Activated CD8-positive, alpha-beta T cell treated with anti-CD3 and anti-CD28 coated beads, Interleukin-2, amount 10 ng/mL, durations not matched to agents 7 days and 5 days (primary cell): ENCODE measurements at regions of chr17 and their contacts with region 1.

Region 1: GRCh38 chr17:80454557-80455335 is 21.7 kb downstream of the NPTX1 start:
- DNase-seq: peak; percentile 97
- ATAC-seq: peak; percentile 95
- H3K4me3 Mint-ChIP-seq: peak overlapping the region; percentile 94
- H3K27ac Mint-ChIP-seq: peak overlapping the region; percentile 95
- H3K4me1 Mint-ChIP-seq: peaks cover 50% of the 10 kb centered on the region
- H3K27me3 Mint-ChIP-seq: peaks cover 16% of the 10 kb centered on the region

Region 2: GRCh38 chr17:80426681-80427326 is 27.9 kb before region 1 on chr17:
- CTCF ChIA-PET with region 1: interaction called, 13 read pairs
- POLR2A ChIA-PET with region 1: interaction called, 7 read pairs
- DNase-seq: peak; percentile 89
- ATAC-seq: peak; percentile 98
- H3K4me3 Mint-ChIP-seq: no peak overlapping the region
- H3K27ac Mint-ChIP-seq: no peak overlapping the region
- H3K4me1 Mint-ChIP-seq: peaks cover 27% of the 10 kb centered on the region
- H3K27me3 Mint-ChIP-seq: no peaks in the 10 kb centered on the region

Region 3: DNA sequence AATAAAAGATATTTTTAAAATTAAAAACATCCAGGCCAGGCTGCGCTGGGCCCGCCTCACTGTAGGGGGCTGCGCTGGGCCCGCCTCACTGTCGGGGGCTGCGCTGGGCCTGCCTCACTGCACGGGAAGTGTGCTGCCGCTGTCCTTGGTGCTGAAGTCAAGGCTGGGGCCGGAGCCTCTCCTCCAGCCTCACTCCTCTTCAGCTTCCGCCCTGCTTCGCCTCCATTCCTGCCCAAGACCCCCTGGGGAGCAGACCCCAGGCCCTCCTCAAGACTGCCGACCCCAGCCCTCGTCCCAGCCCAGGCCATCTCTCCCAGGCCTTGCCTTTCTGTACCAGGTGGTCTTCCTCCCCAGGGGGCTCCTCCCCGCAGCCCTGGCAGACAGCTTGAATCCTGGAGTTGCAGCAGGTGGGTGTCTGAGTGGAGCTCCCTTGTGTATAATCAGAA is 13.6 kb before region 1 on chr17:
- CTCF ChIA-PET with region 1: no interaction called
- POLR2A ChIA-PET with region 1: interaction called, 14 read pairs
- DNase-seq: peak; percentile 80
- ATAC-seq: peak; percentile 87
- H3K4me3 Mint-ChIP-seq: no peak overlapping the region
- H3K27ac Mint-ChIP-seq: no peak overlapping the region
- H3K4me1 Mint-ChIP-seq: no peaks in the 10 kb centered on the region
- H3K27me3 Mint-ChIP-seq: peaks cover 3% of the 10 kb centered on the region

Region 4: DNA sequence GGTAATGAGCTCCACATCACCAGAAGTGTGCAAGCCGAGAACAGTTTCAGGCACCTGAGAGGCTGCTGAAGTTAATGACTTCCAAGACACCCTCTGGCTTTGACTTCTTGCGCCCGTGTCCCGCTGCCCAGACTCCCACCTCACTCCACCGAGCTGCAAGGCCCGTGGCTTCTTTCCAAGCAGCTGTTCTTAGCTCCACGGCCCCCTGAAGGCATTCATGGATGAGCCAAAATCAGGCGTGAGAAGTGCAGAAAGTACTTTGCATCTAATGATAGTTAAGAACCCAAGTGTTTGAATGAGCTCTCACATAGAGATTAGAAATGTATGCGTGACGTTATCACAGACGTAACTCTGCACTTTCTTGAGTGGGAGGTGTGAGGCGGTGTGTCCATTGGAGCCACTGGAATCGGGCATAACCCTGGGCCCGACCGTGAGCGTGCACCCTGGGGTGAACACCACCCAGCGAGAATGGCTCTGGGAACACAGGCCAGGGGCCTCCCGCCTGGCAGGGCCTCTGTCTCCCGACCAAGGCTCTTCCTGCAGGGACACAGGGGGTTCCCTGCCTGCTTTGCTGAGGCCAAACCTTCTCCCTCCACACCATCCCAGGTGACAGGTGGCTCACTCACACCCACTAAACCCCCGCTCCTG is 10.7 kb after region 1 on chr17:
- CTCF ChIA-PET with region 1: interaction called, 4 read pairs
- POLR2A ChIA-PET with region 1: interaction called, 22 read pairs
- DNase-seq: no peak
- ATAC-seq: no peak
- H3K4me3 Mint-ChIP-seq: no peak overlapping the region
- H3K27ac Mint-ChIP-seq: no peak overlapping the region
- H3K4me1 Mint-ChIP-seq: peaks cover 5% of the 10 kb centered on the region
- H3K27me3 Mint-ChIP-seq: peaks cover 24% of the 10 kb centered on the region

Region 5: DNA sequence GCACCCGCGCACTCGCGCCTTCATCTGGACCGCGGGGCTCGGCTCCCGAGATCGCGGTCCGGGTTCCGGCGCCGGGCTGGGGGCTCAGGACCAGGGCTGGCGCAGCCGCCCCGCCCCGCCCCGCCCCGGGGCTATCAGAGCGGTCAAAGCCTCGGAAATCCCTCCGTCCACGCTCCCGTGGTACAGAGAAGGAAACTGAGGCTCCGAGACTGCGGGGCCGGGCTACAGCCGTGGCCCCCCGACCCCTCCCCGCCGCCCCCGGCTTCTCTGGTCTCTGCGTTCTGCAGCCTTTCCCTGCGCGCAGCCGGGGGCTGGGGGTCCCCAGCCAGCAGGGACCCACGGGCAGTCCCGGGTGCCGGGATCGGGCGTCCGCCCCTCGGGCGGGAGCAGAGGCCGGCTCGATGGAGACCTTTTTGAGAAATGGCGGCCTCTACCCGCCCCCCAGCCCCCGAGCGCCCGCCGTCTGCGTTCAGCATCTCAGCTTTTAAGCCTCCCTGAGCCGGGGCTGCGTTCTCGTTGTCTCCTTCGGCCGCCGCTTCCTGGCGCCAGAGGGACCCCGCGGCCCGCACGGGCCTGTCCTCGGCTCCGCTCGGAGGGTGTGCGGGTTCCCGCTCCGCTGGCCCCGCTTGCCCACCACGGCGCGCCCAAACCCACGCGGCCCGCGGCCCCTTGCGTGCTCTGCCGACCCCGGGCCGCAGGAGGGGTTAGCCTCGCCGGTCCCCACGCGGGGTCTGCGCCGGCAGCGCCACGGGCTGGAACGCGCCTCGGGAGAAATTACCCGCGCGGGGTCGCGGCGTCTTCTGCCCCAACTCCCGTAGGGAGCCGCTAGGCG is 23.1 kb after region 1 on chr17:
- CTCF ChIA-PET with region 1: interaction called, 3 read pairs
- POLR2A ChIA-PET with region 1: interaction called, 17 read pairs
- DNase-seq: peak; percentile 62
- ATAC-seq: peak; percentile 54
- H3K4me3 Mint-ChIP-seq: no peak overlapping the region
- H3K27ac Mint-ChIP-seq: no peak overlapping the region
- H3K4me1 Mint-ChIP-seq: peaks cover 18% of the 10 kb centered on the region
- H3K27me3 Mint-ChIP-seq: peaks cover 63% of the 10 kb centered on the region

Region 6: GRCh38 chr17:80504686-80505413 is 50.1 kb after region 1 on chr17:
- CTCF ChIA-PET with region 1: no interaction called
- POLR2A ChIA-PET with region 1: no interaction called
- DNase-seq: no peak
- ATAC-seq: no peak
- H3K4me3 Mint-ChIP-seq: no peak overlapping the region
- H3K27ac Mint-ChIP-seq: no peak overlapping the region
- H3K4me1 Mint-ChIP-seq: no peaks in the 10 kb centered on the region
- H3K27me3 Mint-ChIP-seq: peaks cover 11% of the 10 kb centered on the region